Gastrocnemius medialis (tissue), 4 donors: ENCODE measurements at regions of chr22 and their contacts with region 1.

Region 1: DNA sequence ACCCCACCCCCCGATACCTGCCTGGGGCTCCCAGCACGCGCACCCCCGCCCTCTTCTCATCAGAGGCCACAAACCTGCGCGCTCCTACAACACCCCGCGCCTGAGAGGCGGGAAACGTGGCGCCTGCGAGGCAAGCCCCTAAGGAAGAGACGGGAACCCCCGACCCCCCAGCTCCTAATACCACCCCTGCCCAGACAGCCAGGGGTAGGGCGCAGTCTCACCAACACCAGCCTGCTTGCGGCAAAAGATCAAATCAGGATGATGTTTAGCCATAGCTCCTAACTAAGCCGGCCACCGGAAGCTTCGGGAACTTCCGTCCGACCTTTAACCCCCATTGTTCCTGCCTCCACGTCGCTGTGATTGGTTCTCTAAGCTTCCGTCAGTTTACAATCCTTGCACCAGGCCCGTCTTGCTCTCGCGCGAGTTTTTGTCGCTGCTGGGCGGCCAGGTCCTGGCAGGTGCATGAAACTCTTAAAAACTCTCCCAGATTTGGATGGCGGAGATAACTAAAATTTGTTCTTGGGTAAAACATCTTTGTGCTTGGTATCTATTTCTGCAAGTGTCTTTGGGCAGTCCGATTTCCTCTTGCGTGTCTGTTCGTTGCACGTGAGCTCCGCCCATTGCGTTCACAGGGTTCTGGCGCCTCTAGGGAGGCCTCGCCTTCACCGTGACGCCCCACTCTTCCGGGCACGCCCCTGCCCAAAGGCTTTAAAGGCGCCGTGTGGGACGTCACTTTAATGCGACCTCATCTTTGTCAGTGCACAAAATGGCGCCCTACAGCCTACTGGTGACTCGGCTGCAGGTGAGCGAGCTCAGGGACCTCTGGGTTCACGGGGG is at the starts of genes ACO2 and PHF5A:
- DNase-seq: peak; percentile 95 to 96
- ATAC-seq: peak; percentile 89 to 93
- H3K4me3 ChIP-seq: peak within 1 kb of the TSS; percentile 77 to 94 (median 88)
- H3K27ac ChIP-seq: peak within 1 kb of the TSS; percentile 96 to 98 (median 96)
- H3K4me1 ChIP-seq: peaks cover 44 to 51% of the 10 kb centered on the region in 2 donors
- H3K27me3 ChIP-seq: no peaks in the 10 kb centered on the region
- CTCF ChIP-seq: peak in 2 of 5 experiments; percentile 26 to 45
- POLR2A ChIP-seq: peak; percentile 93 to 95
- total RNA-seq, gene ACO2: 361 to 763 (median 473) TPM
- total RNA-seq, gene PHF5A: 33.8 to 43.5 (median 38.9) TPM

Region 2: GRCh38 chr22:40990430-40990829 is 478.2 kb before region 1 on chr22:
- in situ Hi-C with region 1: no loop called
- intact Hi-C with region 1: no loop called
- DNase-seq: no peak
- ATAC-seq: no peak
- H3K4me3 ChIP-seq: no peak overlapping the region
- H3K27ac ChIP-seq: no peak overlapping the region
- H3K4me1 ChIP-seq: no peaks in the 10 kb centered on the region
- H3K27me3 ChIP-seq: peaks cover 0 to 5% (median 3%) of the 10 kb centered on the region in 3 donors
- CTCF ChIP-seq: no peak
- POLR2A ChIP-seq: no peak

Region 3: GRCh38 chr22:41417622-41418390 is 50.8 kb before region 1 on chr22:
- in situ Hi-C with region 1: no loop called
- intact Hi-C with region 1: no loop called
- DNase-seq: peak; percentile 95 to 99
- ATAC-seq: peak; percentile 58 to 70
- H3K4me3 ChIP-seq: peak overlapping the region; percentile 17 to 23 (median 19)
- H3K27ac ChIP-seq: peak overlapping the region; percentile 97 to 100 (median 98)
- H3K4me1 ChIP-seq: peaks cover 52 to 64% of the 10 kb centered on the region in 2 donors
- H3K27me3 ChIP-seq: no peaks in the 10 kb centered on the region
- CTCF ChIP-seq: no peak
- POLR2A ChIP-seq: peak; percentile 53 to 62

Region 4: DNA sequence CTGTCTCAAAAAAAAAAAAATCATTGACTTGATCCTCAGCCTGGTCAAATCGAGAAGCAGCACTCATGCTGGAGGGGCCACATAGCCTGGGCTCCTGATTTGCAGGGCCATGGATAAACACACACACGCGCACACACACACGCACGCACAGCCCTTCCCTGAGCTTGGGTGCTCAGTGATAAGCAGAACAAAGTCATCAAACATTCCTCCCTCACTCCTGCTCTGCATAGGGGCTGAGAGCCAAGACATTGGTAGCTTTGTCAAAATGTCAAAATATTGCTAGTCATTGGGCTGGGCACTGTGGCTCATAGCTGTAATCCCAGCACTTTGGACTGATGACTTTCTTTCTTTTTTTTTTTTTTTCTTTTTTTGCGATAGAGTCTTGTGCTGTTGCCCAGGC is 1286.1 kb after region 1 on chr22:
- in situ Hi-C with region 1: no loop called
- intact Hi-C with region 1: loop called (anchors 10 kb)
- DNase-seq: no peak
- ATAC-seq: no peak
- H3K4me3 ChIP-seq: no peak overlapping the region
- H3K27ac ChIP-seq: no peak overlapping the region
- H3K4me1 ChIP-seq: peaks cover 3 to 11% of the 10 kb centered on the region in 2 donors
- H3K27me3 ChIP-seq: no peaks in the 10 kb centered on the region
- CTCF ChIP-seq: no peak
- POLR2A ChIP-seq: no peak